Heart right ventricle (tissue), 16 donors: ENCODE measurements at regions of chr5 and their contacts with region 1.

Region 1: DNA sequence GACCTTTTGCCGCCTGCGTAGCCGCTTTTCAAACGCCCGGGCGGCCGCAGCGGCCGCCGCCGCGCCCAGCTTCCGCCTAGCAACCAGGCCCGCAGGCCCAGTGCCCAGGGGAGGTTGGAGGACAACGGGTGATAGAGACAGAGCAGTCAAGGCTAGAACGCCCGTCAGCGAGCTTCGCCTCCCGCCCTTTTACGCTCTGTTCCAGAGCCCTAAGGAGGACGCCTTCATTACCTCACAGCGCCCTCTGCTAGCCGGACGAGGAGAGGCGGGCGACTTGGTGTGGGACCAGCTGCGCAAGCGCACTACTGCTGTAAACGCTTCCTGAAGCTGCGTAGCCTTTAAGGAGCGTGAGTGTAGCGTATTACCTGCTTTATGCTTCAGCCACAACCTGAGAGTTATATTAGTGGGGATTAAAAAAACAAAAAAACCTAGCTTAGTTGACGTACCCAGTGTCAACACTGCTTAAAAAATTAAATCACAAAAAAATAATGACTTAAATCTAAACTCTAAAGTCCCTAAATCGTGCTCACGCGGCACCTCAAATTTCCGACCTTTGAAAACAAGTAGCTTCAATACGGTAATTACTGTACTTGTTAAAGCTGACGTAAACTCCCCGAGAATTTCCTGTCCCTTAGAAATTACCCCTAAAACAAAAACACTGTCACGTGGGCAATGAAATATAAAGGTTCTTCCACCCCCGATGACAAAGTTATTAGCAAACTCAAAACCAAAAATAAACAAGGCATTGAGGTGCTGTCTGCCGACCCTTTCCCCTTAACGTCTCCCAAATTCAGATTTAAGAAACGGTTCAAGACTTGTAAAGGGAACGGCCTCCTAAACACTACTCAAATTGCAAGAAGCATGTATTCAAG is at the start of gene CEP120:
- DNase-seq: peak; percentile 98
- ATAC-seq: peak; percentile 99 to 100 (median 100)
- H3K4me3 ChIP-seq: peak within 1 kb of the TSS; percentile 69 to 97 (median 90)
- H3K27ac ChIP-seq: peak within 1 kb of the TSS; percentile 66 to 96 (median 90)
- H3K4me1 ChIP-seq: peaks cover 0 to 40% (median 18%) of the 10 kb centered on the region in 9 donors
- H3K27me3 ChIP-seq: no peaks in the 10 kb centered on the region
- CTCF ChIP-seq: peak; percentile 55 to 95 (median 81)
- total RNA-seq, gene CEP120: 7.1 to 14.9 (median 11.3) TPM

Region 2: GRCh38 chr5:123505633-123506032 is 82.1 kb after region 1 on chr5:
- intact Hi-C with region 1: loop called in 4 of 10 experiments (anchors 2 to 10 kb)
- DNase-seq: no peak
- ATAC-seq: peak in 1 of 8 donors; percentile 53
- H3K4me3 ChIP-seq: no peak overlapping the region
- H3K27ac ChIP-seq: no peak overlapping the region
- H3K4me1 ChIP-seq: peaks cover 0 to 3% (median 0%) of the 10 kb centered on the region in 9 donors
- H3K27me3 ChIP-seq: no peaks in the 10 kb centered on the region
- CTCF ChIP-seq: no peak

Region 3: GRCh38 chr5:123605822-123606221 is 182.3 kb after region 1 on chr5:
- intact Hi-C with region 1: loop called in 9 of 10 experiments (anchors 1 to 10 kb)
- DNase-seq: no peak
- ATAC-seq: no peak
- H3K4me3 ChIP-seq: no peak overlapping the region
- H3K27ac ChIP-seq: no peak overlapping the region
- H3K4me1 ChIP-seq: peaks cover 0 to 12% (median 0%) of the 10 kb centered on the region in 9 donors
- H3K27me3 ChIP-seq: no peaks in the 10 kb centered on the region
- CTCF ChIP-seq: no peak

Region 4: DNA sequence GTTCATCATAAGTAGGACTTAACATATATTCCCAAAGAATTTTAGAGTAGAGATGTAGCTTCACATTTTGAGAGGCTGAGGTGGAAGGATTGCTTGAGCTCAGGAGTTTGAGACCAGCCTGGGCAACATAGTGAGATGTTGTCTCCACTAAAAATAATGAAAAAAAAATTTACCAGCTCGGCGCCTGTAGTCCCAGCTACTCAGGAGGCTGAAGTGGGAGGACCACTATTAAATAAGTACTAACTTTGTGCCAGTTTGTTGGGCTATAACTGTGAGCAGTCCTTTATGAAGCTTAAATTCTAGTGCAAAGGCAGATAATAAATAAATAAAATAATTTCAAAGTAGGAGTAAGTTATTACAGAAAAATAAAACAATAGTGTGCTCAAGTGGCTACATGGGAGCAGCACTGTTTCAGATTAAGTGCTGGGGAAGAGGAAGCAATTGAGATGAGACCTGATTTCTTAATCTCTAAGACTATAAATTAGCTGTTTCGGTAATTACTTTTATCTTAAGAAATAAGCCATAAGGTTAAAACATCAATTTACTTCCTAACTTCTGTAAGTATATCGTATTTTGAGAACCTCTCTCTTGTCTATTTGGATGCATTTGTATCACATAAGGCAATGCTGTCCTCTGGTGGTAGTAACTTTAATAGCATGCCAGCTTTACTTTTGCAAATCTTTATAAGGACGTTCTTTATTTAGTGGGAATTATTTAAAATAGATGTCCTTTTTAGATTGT is 187.3 kb after region 1 on chr5:
- intact Hi-C with region 1: loop called in 8 of 10 experiments (anchors 1 to 10 kb)
- DNase-seq: peak in 1 of 2 donors; percentile 29
- ATAC-seq: peak in 5 of 8 donors; percentile 49 to 69 (median 61)
- H3K4me3 ChIP-seq: no peak overlapping the region
- H3K27ac ChIP-seq: peak overlapping the region in 1 of 10 donors; percentile 24
- H3K4me1 ChIP-seq: peaks cover 0 to 18% (median 0%) of the 10 kb centered on the region in 9 donors
- H3K27me3 ChIP-seq: no peaks in the 10 kb centered on the region
- CTCF ChIP-seq: peak; percentile 89 to 99 (median 94)

Region 5: DNA sequence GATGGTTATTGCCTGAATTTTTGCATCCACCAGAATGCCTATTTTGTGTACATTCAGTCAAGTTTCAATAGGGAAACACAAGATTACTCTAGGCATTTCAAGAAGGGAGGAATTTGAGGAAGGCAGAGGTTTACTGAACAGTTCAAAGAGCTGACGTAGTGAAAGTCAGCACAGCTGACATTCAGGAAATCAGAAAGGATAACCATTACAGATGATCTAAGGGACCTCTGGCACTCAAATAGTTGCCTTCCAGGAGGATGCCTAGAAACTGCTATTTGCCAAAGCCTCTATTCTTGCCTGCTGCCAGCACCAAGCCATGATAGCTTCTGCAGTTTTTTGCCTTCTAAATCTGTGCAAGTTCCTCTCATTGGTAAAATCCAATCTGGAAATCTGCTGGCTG is 461.5 kb after region 1 on chr5:
- intact Hi-C with region 1: no loop called
- DNase-seq: no peak
- ATAC-seq: no peak
- H3K4me3 ChIP-seq: no peak overlapping the region
- H3K27ac ChIP-seq: no peak overlapping the region
- H3K4me1 ChIP-seq: peaks cover 0 to 27% (median 21%) of the 10 kb centered on the region in 9 donors
- H3K27me3 ChIP-seq: no peaks in the 10 kb centered on the region
- CTCF ChIP-seq: no peak